Esophagus muscularis mucosa (tissue), 4 donors: ENCODE measurements at regions of chr19 and their contacts with region 1.

Region 1: GRCh38 chr19:13060964-13061927 is 41.4 kb downstream of the LYL1 start:
- DNase-seq: no peak
- H3K4me3 ChIP-seq: peak overlapping the region; percentile 43 to 57 (median 50)
- H3K27ac ChIP-seq: peak overlapping the region; percentile 97 to 98 (median 98)
- H3K4me1 ChIP-seq: peaks cover 99 to 100% (median 100%) of the 10 kb centered on the region in 4 donors
- H3K27me3 ChIP-seq: no peaks in the 10 kb centered on the region
- CTCF ChIP-seq: peak; percentile 96 to 98 (median 97)
- EP300 ChIP-seq: no peak
- POLR2A ChIP-seq: no peak

Region 2: GRCh38 chr19:13093407-13094105 is 32.3 kb after region 1 on chr19:
- intact Hi-C with region 1: loop called (anchors 2 kb)
- DNase-seq: no peak
- H3K4me3 ChIP-seq: no peak overlapping the region
- H3K27ac ChIP-seq: peak overlapping the region; percentile 79 to 90 (median 86)
- H3K4me1 ChIP-seq: peaks cover 67 to 97% (median 94%) of the 10 kb centered on the region in 4 donors
- H3K27me3 ChIP-seq: peaks cover 0 to 8% (median 0%) of the 10 kb centered on the region in 4 donors
- CTCF ChIP-seq: peak; percentile 94 to 97 (median 97)
- EP300 ChIP-seq: no peak
- POLR2A ChIP-seq: no peak